Activated T-helper 2 cell treated with anti-CD3 and anti-CD28 coated beads, Interferon-gamma antibody, Interleukin-2, Interleukin-4, amounts not matched to agents 10 μg/mL and 5 μg/mL and 100 μg/mL, durations not matched to agents 14 hours and 24 hours and 36 hours (primary cell): ENCODE measurements at regions of chr6 and their contacts with region 1.

Region 1: GRCh38 chr6:100116411-100117194 is 122.6 kb upstream of the MCHR2 start:
- DNase-seq: no peak
- H3K4me3 Mint-ChIP-seq: no peak overlapping the region
- H3K27ac Mint-ChIP-seq: no peak overlapping the region
- H3K4me1 Mint-ChIP-seq: peaks cover 16% of the 10 kb centered on the region
- H3K27me3 Mint-ChIP-seq: peaks cover 13% of the 10 kb centered on the region

Region 2: GRCh38 chr6:99349171-99350141 is 767.1 kb before region 1 on chr6 and contains the start of gene FAXC:
- intact Hi-C with region 1: no loop called
- DNase-seq: peak; percentile 12
- H3K4me3 Mint-ChIP-seq: peak within 1 kb of the TSS; percentile 30
- H3K27ac Mint-ChIP-seq: no peak within 1 kb of the TSS
- H3K4me1 Mint-ChIP-seq: peaks cover 7% of the 10 kb centered on the region
- H3K27me3 Mint-ChIP-seq: peaks cover 62% of the 10 kb centered on the region
- total RNA-seq, gene FAXC: 0.25 TPM in 1 of 2 replicates, not detected in the other

Region 3: DNA sequence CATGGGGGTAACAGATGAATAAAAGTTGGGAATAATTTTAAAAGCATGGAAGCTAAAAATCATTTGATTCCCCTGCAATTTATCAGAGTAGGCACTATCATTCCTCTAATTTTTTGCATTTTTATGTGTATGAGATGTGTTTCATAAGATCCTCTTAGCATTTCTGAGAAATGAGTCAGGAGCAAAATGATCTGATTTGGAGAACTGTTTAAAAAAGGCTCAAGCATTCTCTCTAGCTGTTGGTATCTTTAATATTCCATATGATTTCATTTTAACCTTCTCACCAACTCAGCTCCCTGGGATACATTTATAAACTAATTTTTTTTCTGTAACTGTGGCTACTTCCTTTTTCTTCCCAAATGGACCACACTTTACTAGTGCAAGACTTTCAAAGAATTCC is 183.5 kb before region 1 on chr6:
- intact Hi-C with region 1: no loop called
- DNase-seq: no peak
- H3K4me3 Mint-ChIP-seq: no peak overlapping the region
- H3K27ac Mint-ChIP-seq: no peak overlapping the region
- H3K4me1 Mint-ChIP-seq: no peaks in the 10 kb centered on the region
- H3K27me3 Mint-ChIP-seq: no peaks in the 10 kb centered on the region

Region 4: GRCh38 chr6:99951016-99951805 is 165.4 kb before region 1 on chr6:
- intact Hi-C with region 1: no loop called
- DNase-seq: no peak
- H3K4me3 Mint-ChIP-seq: no peak overlapping the region
- H3K27ac Mint-ChIP-seq: no peak overlapping the region
- H3K4me1 Mint-ChIP-seq: no peaks in the 10 kb centered on the region
- H3K27me3 Mint-ChIP-seq: no peaks in the 10 kb centered on the region

Region 5: GRCh38 chr6:100657678-100658330 is 541.2 kb after region 1 on chr6:
- intact Hi-C with region 1: loop called (anchors 5 kb)
- DNase-seq: no peak
- H3K4me3 Mint-ChIP-seq: no peak overlapping the region
- H3K27ac Mint-ChIP-seq: no peak overlapping the region
- H3K4me1 Mint-ChIP-seq: no peaks in the 10 kb centered on the region
- H3K27me3 Mint-ChIP-seq: no peaks in the 10 kb centered on the region